ENCODE measurements at regions of chr15 and their contacts with region 1.

Region 1: GRCh38 chr15:80058851-80059785 is at the start of gene ZFAND6:
- DNase-seq: peak; percentile 95 to 98 (median 96)
- ATAC-seq: peak; percentile 98 to 99 (median 98)
- H3K4me3 ChIP-seq: peak within 1 kb of the TSS; percentile 66 to 95 (median 92)
- H3K27ac ChIP-seq: peak within 1 kb of the TSS; percentile 88 to 96 (median 93)
- H3K4me1 ChIP-seq: peaks cover 0 to 39% (median 22%) of the 10 kb centered on the region in 12 donors
- H3K27me3 ChIP-seq: peaks cover 0 to 4% (median 0%) of the 10 kb centered on the region in 9 donors
- CTCF ChIP-seq: peak in 2 of 12 donors; percentile 5 to 15
- POLR2A ChIP-seq: peak; percentile 76 to 85
- total RNA-seq, gene ZFAND6: 67.4 to 105 (median 79.9) TPM

Region 2: DNA sequence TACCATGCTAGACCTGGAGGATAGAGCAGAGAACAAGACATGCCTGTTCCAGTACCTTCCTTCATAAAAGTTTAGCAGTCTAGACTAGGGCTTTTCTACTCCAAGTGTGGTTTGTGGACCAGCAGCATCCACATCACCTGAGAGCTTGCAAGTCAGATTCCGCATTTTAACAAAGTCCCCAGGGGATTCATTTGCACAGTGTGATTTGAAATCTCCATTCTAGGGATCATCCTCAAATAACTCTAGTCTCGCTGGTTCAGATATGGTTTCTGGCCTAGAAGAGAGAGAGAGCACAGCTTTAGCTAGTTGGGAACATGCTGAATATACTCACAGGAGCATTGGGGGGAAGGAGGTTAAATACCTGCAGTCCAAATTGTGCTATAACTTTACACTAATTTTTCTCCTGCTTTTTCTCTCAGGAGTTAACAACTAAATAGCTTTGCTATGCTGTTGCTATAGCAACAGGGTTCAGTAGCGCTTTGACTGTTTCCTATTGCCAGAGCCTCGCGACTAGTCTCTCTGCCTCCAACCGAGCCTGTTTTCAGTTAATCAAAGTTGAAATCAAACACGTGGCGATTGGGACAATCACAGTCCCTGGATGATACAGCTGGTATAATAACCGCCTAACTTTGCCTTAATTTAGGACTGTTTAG is 904.5 kb before region 1 on chr15:
- intact Hi-C with region 1: no loop called
- DNase-seq: no peak
- ATAC-seq: no peak
- H3K4me3 ChIP-seq: no peak overlapping the region
- H3K27ac ChIP-seq: no peak overlapping the region
- H3K4me1 ChIP-seq: peaks cover 0 to 3% (median 0%) of the 10 kb centered on the region in 12 donors
- H3K27me3 ChIP-seq: peaks cover 0 to 5% (median 0%) of the 10 kb centered on the region in 9 donors
- CTCF ChIP-seq: no peak
- POLR2A ChIP-seq: no peak

Region 3: DNA sequence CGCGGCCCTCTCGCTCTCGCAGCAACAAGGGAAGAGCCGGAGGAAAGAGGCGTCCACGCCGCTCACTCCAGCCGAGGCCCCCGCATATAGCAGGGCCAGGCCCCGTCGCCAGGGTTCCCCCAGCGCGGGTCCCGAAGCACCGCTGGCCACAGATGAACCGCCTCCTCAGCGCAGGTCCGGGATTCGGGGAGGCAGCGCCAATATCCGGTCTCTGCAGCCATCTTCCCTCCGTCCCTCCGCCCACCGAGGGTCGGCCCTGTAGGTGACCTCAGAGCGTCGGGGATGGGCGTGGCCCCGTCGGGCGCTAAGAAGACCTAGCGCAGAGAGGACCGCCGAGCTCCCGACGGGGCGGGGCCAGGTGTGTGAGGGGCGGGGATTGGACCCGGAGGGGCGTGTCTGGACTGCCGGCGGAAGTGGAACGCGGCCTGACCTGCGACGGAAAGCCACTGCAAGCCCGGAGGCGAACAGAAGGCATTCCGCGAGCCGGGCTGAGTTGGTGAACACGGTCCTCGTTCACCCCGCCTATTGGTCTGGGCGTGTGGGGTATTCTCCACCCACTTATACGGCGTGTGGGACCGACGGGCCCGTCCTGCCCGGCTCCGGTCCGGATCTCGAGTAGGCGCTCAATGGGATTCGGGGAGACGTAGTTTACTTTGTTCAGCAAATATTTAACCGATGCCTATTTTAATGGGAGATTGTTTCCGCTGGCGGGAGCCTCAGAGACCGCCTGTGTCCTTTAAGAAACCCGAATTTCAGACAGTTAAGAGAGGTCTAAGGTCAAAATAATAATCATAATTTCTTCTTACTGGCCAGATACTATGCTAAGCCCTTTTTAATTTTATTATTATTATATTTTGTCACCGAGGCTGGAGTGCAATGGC is 135.4 kb before region 1 on chr15:
- intact Hi-C with region 1: loop called in 1 of 10 experiments (anchors 5 kb)
- DNase-seq: peak; percentile 93 to 97 (median 96)
- ATAC-seq: peak; percentile 99
- H3K4me3 ChIP-seq: peak overlapping the region; percentile 56 to 98 (median 85)
- H3K27ac ChIP-seq: peak overlapping the region; percentile 81 to 98 (median 94)
- H3K4me1 ChIP-seq: peaks cover 0 to 20% (median 5%) of the 10 kb centered on the region in 12 donors
- H3K27me3 ChIP-seq: no peaks in the 10 kb centered on the region
- CTCF ChIP-seq: no peak
- POLR2A ChIP-seq: peak; percentile 35 to 68

Region 4: DNA sequence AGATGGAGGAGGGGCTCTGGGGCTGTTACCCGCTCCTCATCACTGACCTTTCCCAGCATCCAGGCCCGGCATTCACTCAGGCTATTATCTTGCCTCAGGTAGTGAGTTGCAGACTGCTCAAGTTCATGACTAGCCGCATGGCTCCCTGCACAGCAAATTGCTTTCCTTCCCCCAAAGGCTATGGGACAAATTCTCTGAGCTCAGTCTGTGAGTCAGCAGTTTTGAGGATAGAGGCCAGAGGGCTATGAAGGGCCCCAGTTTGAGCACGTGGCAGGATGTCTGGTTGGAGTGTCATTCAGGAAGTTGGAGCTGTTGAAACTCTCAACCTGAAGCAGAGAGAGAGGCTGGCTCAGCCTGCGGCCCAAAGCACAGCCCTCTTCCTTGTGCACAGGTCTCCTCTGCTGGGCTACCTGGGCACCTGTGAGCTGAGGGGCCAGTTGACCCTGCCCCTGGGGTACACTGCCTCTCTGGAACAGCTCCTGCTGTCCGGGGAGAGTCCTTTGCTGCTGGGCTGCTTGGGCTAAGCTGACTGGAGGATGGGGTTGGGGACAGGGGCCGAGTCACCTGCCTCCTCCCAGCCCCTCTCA is 101.5 kb after region 1 on chr15:
- intact Hi-C with region 1: loop called in 4 of 10 experiments (anchors 5 to 10 kb)
- DNase-seq: peak in 4 of 5 donors; percentile 41 to 62 (median 51)
- ATAC-seq: peak; percentile 39 to 87 (median 76)
- H3K4me3 ChIP-seq: no peak overlapping the region
- H3K27ac ChIP-seq: peak overlapping the region in 2 of 12 donors; percentile 36 to 72
- H3K4me1 ChIP-seq: peaks cover 0 to 29% (median 6%) of the 10 kb centered on the region in 12 donors
- H3K27me3 ChIP-seq: no peaks in the 10 kb centered on the region
- CTCF ChIP-seq: no peak
- POLR2A ChIP-seq: no peak